Calu3 (cell line): ENCODE measurements at regions of chr3 and their contacts with region 1.

Region 1: GRCh38 chr3:187507268-187507667 is 139.1 kb downstream of the RTP4 start:
- DNase-seq: no peak
- H3K4me3 Mint-ChIP-seq: peak overlapping the region; percentile 37
- H3K27ac Mint-ChIP-seq: peak overlapping the region; percentile 60
- H3K4me1 Mint-ChIP-seq: peaks cover 30% of the 10 kb centered on the region
- H3K27me3 Mint-ChIP-seq: no peaks in the 10 kb centered on the region
- CTCF ChIP-seq: no peak

Region 2: GRCh38 chr3:187164885-187165543 is 342.3 kb before region 1 on chr3:
- CTCF ChIA-PET with region 1: no interaction called
- intact Hi-C with region 1: no loop called
- DNase-seq: peak; percentile 65
- H3K4me3 Mint-ChIP-seq: no peak overlapping the region
- H3K27ac Mint-ChIP-seq: no peak overlapping the region
- H3K4me1 Mint-ChIP-seq: peaks cover 23% of the 10 kb centered on the region
- H3K27me3 Mint-ChIP-seq: peaks cover 26% of the 10 kb centered on the region
- CTCF ChIP-seq: peak; percentile 65

Region 3: GRCh38 chr3:187406927-187407326 is 100.3 kb before region 1 on chr3:
- CTCF ChIA-PET with region 1: no interaction called
- intact Hi-C with region 1: loop called (anchors 5 kb)
- DNase-seq: no peak
- H3K4me3 Mint-ChIP-seq: no peak overlapping the region
- H3K27ac Mint-ChIP-seq: no peak overlapping the region
- H3K4me1 Mint-ChIP-seq: peaks cover 31% of the 10 kb centered on the region
- H3K27me3 Mint-ChIP-seq: no peaks in the 10 kb centered on the region
- CTCF ChIP-seq: no peak

Region 4: GRCh38 chr3:187587076-187587475 is 79.8 kb after region 1 on chr3:
- CTCF ChIA-PET with region 1: no interaction called
- intact Hi-C with region 1: no loop called
- DNase-seq: no peak
- H3K4me3 Mint-ChIP-seq: no peak overlapping the region
- H3K27ac Mint-ChIP-seq: no peak overlapping the region
- H3K4me1 Mint-ChIP-seq: no peaks in the 10 kb centered on the region
- H3K27me3 Mint-ChIP-seq: peaks cover 35% of the 10 kb centered on the region
- CTCF ChIP-seq: no peak